Activated CD4-positive, alpha-beta memory T cell treated with anti-CD3 and anti-CD28 coated beads for 36 hours (primary cell): ENCODE measurements at regions of chr19 and their contacts with region 1.

Region 1: DNA sequence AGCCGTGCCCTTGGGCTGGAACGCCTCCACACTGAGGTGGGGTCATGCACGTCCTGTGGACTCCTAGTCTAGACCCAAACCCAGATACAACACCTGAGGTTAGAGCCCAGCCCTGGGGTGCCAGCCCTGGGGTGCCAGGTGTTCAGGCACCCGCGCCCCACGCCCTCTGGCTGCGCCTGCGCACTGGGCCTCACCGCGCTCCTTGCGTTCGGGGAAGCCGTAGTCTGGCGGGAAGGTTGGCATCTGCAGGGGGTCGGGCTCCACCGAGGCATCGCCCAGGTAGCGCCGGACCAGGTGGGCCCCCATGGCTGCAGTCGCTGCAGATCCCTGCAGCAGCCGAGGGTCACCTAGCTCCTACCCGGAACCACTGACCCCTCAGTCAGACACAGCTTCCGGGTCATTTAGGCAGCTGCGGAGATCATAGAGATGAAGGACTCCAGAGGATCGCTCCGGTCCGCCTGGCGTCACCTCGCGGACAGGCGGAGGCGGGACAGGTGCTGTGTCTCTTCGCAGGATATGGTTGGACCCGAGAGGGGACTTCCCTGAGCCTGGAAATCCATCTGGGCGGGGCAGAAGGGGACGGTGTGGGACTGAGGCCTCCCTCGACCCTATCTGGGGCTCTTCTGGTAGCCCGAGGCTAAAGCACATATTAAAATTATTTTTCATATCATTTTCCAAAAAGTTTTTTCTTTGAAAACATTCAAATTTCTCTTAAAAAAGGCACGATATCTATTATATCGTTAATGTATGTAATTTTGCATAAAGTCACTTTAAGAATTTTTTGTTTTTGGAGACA is at the start of gene NDUFB7:
- DNase-seq: peak; percentile 95
- H3K4me3 Mint-ChIP-seq: peak within 1 kb of the TSS; percentile 98
- H3K27ac Mint-ChIP-seq: peak within 1 kb of the TSS; percentile 85
- H3K4me1 Mint-ChIP-seq: peaks cover 33% of the 10 kb centered on the region
- H3K27me3 Mint-ChIP-seq: no peaks in the 10 kb centered on the region
- total RNA-seq, gene NDUFB7: 118 to 130 TPM

Region 2: DNA sequence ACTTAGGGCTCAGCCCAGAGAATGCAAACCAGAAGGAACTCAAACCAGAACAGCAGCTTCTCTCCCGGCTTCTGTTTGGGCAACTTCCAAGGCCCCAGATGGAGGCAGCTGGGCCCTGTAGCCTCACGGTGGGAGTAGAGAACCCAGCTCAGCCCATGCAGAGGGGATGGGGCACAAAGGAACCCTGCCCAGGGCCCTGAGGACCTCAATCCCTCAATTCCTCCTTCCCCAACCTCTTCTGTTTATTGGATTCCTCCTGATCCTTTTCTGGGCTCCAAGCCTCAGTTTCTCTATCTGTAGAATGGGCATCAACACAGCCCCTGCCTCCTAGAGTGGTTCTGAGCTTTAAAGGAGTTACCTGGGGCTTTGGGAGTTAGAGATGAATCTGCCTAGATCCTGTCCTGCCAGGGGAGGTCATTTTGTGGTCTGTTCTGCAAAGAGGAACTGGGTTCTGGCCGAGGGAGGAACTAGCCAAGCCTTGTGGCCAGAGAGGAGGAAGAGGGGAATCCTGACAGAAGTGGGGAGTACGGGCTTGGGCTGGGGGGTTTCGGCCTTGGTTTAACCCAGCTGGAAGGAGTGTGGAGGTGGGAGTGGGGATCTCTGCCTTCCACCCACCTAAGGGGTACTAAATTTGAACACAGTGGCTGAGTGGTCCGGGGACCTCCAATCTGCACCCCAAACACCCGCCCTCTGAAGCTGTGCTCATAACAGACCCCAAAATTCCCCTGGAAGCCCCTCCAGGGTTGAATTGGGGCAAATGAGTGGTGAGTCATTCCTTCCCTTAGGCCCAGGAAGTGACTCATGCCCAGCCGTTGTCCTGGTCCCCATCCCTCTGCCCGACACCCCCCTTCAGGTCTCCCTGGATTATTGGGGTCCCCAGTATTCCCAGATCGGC is 188.0 kb before region 1 on chr19:
- CTCF ChIA-PET with region 1: no interaction called
- POLR2A ChIA-PET with region 1: no interaction called
- intact Hi-C with region 1: no loop called
- DNase-seq: peak; percentile 81
- H3K4me3 Mint-ChIP-seq: peak overlapping the region; percentile 84
- H3K27ac Mint-ChIP-seq: peak overlapping the region; percentile 95
- H3K4me1 Mint-ChIP-seq: peaks cover 30% of the 10 kb centered on the region
- H3K27me3 Mint-ChIP-seq: no peaks in the 10 kb centered on the region

Region 3: GRCh38 chr19:14542711-14543328 is 29.1 kb before region 1 on chr19:
- CTCF ChIA-PET with region 1: no interaction called
- POLR2A ChIA-PET with region 1: no interaction called
- intact Hi-C with region 1: no loop called
- DNase-seq: no peak
- H3K4me3 Mint-ChIP-seq: no peak overlapping the region
- H3K27ac Mint-ChIP-seq: no peak overlapping the region
- H3K4me1 Mint-ChIP-seq: peaks cover 21% of the 10 kb centered on the region
- H3K27me3 Mint-ChIP-seq: no peaks in the 10 kb centered on the region

Region 4: GRCh38 chr19:14689598-14690503 is 118.0 kb after region 1 on chr19 and contains the start of gene ZNF333:
- CTCF ChIA-PET with region 1: interaction called, 565 read pairs
- POLR2A ChIA-PET with region 1: interaction called, 12 read pairs
- intact Hi-C with region 1: loop called (anchors 1 kb)
- DNase-seq: peak; percentile 100
- H3K4me3 Mint-ChIP-seq: peak within 1 kb of the TSS; percentile 83
- H3K27ac Mint-ChIP-seq: peak within 1 kb of the TSS; percentile 97
- H3K4me1 Mint-ChIP-seq: peaks cover 20% of the 10 kb centered on the region
- H3K27me3 Mint-ChIP-seq: no peaks in the 10 kb centered on the region
- total RNA-seq, gene ZNF333: 16.7 to 18.0 TPM

Region 5: GRCh38 chr19:14786421-14786851 is 214.5 kb after region 1 on chr19:
- CTCF ChIA-PET with region 1: no interaction called
- POLR2A ChIA-PET with region 1: no interaction called
- intact Hi-C with region 1: loop called (anchors 10 kb)
- DNase-seq: peak; percentile 40
- H3K4me3 Mint-ChIP-seq: no peak overlapping the region
- H3K27ac Mint-ChIP-seq: no peak overlapping the region
- H3K4me1 Mint-ChIP-seq: peaks cover 16% of the 10 kb centered on the region
- H3K27me3 Mint-ChIP-seq: peaks cover 18% of the 10 kb centered on the region

Region 6: DNA sequence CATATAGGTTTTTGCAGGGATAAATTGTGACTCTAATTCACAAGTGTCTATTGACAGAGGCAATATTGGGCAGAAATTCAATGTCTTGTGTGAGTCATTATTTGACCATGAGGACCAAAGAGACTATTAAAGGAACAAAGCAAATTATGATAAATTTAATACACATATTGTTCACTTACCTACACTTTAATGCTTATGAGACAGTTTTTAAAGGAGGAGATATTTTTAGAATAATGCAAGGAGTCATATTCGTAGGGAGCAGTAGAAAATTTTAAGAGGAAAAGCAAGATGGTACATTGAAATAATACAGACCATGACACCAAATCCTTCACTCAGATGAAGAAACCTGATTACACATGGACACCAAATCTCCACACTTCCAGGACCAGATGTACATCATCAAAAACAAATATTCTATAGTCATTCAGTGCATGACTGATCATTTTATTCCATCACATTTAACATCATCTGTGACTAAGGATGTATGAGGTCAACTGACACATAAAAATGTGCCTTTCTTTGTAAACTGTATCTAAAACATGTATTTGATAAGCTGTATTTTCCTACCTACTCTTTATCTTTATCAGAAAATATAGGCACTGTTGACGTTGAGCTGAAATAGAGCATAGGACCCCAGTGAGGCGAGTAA is 318.2 kb after region 1 on chr19:
- CTCF ChIA-PET with region 1: interaction called, 5 read pairs
- POLR2A ChIA-PET with region 1: no interaction called
- intact Hi-C with region 1: loop called (anchors 2 kb)
- DNase-seq: no peak
- H3K4me3 Mint-ChIP-seq: no peak overlapping the region
- H3K27ac Mint-ChIP-seq: no peak overlapping the region
- H3K4me1 Mint-ChIP-seq: peaks cover 5% of the 10 kb centered on the region
- H3K27me3 Mint-ChIP-seq: peaks cover 23% of the 10 kb centered on the region